ENCODE measurements at regions of chr15 and their contacts with region 1.

Region 1: DNA sequence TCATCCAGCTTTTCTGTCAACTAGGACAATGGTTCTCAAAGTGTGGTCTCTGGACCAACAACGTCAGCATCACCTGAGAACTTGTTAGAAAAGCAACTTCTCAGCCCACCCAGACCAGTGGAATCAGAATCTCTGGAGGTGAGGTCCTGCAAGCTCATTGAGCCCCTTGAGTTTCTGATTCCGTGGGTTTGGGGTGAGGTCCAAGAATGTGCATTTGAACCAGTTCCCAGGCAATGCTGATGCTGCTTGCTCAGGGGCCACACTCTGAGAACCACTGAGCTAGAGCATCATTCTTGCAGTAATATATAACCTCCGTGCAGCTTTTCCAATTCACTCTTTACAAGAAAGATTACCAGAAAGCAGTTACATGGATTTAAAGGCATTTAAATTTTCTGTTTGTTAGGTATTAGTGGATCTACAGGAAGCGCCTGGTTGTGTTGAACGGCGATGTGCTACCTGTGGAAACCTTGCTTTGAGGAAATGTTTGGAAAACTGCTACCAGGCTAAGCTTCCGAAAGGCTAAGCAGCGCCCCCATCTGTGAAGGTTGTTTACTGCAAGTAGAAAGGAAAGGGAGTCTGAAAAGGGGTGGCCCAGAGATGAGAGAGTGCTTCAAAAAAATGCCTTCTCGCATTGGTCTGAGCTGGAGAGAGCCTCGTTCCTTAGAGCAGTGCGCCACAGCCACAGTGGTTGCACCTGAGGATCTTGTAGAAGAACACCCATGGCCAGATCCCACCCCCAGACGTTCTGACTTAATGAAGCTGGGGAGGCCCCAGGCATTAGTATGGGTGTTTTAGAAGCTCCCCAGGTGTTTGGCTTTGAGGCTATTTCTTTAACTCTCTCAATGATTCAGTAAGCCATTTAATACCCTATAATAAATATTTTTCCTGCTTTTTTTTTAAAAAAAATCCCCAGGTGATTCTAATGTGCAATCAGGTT is 50.0 kb downstream of the RLBP1 start:
- DNase-seq: peak; percentile 83
- ATAC-seq: peak; percentile 95
- H3K4me3 Mint-ChIP-seq: no peak overlapping the region
- H3K27ac Mint-ChIP-seq: peak overlapping the region; percentile 32; the same call in 1 of the 2 replicates
- H3K4me1 Mint-ChIP-seq: peaks cover 7% of the 10 kb centered on the region
- H3K27me3 Mint-ChIP-seq: no peaks in the 10 kb centered on the region
- CTCF ChIP-seq: peak; percentile 76

Region 2: DNA sequence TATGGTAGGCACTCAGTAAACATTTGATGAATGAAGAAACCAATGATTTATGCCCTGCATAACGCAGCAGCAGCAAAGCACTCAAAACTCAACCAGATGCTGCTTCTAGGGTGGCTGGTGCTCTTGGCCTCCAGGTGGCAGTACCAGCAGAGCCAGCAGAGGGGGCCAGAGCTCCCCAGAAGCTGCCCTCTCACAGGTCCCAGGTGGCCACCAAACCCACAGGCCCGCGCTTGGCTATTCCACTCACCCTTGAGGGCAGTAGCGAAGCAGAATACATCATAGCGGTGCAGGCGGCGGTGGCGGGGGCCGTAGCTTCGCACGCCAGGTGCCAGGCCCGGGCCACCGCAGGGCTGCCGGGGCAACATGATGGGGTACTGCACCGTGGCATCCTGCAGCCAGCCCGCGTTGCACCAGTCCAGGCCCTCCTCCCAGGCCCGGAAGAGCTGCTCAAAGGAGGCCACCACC is 292.7 kb before region 1 on chr15:
- CTCF ChIA-PET with region 1: interaction called, 18 read pairs
- POLR2A ChIA-PET with region 1: no interaction called
- DNase-seq: peak; percentile 86
- ATAC-seq: peak; percentile 92
- H3K4me3 Mint-ChIP-seq: no peak overlapping the region
- H3K27ac Mint-ChIP-seq: peak overlapping the region; percentile 85; the same call in 1 of the 2 replicates
- H3K4me1 Mint-ChIP-seq: peaks cover 14% of the 10 kb centered on the region
- H3K27me3 Mint-ChIP-seq: no peaks in the 10 kb centered on the region
- CTCF ChIP-seq: peak; percentile 60

Region 3: DNA sequence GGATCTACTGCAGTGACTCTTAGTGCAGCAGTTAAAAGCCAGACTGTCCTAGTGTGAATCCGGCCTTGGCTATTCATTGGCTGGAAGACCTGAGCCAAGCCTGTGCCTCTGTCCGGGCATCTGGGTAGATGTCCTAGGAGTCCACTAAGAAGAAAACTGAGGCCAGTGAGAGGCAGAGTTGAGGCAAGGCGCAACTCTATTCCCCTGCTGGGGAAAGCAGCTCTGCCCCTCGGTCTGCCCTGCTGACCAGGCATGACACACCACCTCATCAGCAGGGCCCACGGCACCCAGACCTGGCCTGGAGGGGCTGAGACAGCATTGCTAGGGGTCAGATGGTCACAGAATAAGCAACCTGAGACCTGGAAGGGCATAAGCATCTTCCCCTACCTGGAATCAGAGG is 129.9 kb before region 1 on chr15:
- CTCF ChIA-PET with region 1: interaction called, 16 read pairs
- POLR2A ChIA-PET with region 1: no interaction called
- DNase-seq: no peak
- ATAC-seq: no peak
- H3K4me3 Mint-ChIP-seq: no peak overlapping the region
- H3K27ac Mint-ChIP-seq: no peak overlapping the region
- H3K4me1 Mint-ChIP-seq: peaks cover 8% of the 10 kb centered on the region
- H3K27me3 Mint-ChIP-seq: peaks cover 7% of the 10 kb centered on the region; the same call in 1 of the 2 replicates
- CTCF ChIP-seq: no peak

Region 4: DNA sequence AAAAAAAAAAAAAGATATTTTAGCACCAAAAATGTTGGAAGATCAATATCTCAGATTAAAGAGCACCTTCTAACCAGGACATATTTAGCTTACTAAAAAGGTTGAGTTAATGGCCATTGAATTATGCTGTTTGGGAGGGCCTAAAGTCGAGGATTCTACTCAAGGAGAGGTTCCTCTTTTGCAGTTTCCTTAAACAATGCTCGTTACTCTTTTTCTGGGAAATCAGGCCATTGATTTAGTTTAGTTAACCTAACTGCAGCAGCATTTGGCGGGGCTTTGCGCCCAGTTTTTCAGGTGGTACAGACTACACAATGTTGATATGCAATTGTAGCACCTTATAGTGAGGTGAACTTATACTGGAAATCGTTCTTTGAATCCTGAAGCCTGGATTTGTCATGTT is 76.3 kb before region 1 on chr15:
- CTCF ChIA-PET with region 1: interaction called, 27 read pairs
- POLR2A ChIA-PET with region 1: no interaction called
- DNase-seq: no peak
- ATAC-seq: no peak
- H3K4me3 Mint-ChIP-seq: no peak overlapping the region
- H3K27ac Mint-ChIP-seq: no peak overlapping the region
- H3K4me1 Mint-ChIP-seq: peaks cover 46% of the 10 kb centered on the region
- H3K27me3 Mint-ChIP-seq: no peaks in the 10 kb centered on the region
- CTCF ChIP-seq: no peak

Region 5: GRCh38 chr15:89129123-89129815 is 42.1 kb before region 1 on chr15:
- CTCF ChIA-PET with region 1: interaction called, 31 read pairs
- POLR2A ChIA-PET with region 1: no interaction called
- DNase-seq: peak; percentile 81
- ATAC-seq: peak; percentile 87
- H3K4me3 Mint-ChIP-seq: no peak overlapping the region
- H3K27ac Mint-ChIP-seq: no peak overlapping the region
- H3K4me1 Mint-ChIP-seq: no peaks in the 10 kb centered on the region
- H3K27me3 Mint-ChIP-seq: no peaks in the 10 kb centered on the region
- CTCF ChIP-seq: peak; percentile 68

Region 6: GRCh38 chr15:89197503-89197971 is 26.1 kb after region 1 on chr15:
- CTCF ChIA-PET with region 1: interaction called, 35 read pairs
- POLR2A ChIA-PET with region 1: no interaction called
- DNase-seq: peak; percentile 72
- ATAC-seq: peak; percentile 84
- H3K4me3 Mint-ChIP-seq: peak overlapping the region; percentile 5; the same call in 1 of the 2 replicates
- H3K27ac Mint-ChIP-seq: peak overlapping the region; percentile 85
- H3K4me1 Mint-ChIP-seq: peaks cover 63% of the 10 kb centered on the region
- H3K27me3 Mint-ChIP-seq: no peaks in the 10 kb centered on the region
- CTCF ChIP-seq: no peak

Region 7: DNA sequence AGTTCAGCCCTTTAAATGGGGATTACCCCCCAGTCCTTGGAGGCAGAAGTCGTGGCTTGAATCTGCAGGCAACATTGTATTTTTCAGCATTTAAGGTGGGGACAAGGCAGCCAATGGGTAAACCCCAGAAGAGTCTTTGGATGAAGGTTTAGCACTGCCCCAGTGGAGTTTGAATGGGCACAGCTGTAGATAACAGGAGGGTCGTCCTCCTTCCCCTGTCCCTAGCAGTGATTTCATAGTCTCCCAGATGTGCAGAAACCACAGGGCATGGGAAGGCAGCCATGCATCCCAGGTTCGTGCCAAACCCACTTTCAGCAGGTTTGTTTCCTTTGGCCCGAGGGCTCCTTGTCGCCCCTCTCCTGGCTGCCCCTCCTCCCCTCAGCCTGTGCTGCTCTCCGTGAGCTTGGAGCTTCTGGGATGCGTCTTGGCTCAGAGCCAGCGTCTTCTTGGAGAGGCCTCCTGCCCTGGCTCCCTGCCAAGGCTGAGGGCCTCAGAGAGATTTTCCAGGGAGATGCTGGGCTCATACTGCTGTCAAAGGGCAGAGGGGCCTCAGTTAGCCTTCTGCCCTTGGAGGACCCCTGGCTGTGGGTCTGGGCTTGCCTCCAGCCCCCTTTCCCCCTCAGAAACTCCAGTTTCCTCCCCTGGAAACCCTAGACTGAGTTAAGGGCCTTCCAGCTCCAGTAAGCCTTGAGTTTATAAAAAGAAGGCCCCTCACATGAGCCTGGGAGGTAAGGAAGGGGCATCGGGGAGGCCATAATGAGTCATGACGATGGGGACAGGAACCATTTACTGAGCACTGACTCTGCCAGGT is 212.2 kb after region 1 on chr15:
- CTCF ChIA-PET with region 1: no interaction called
- POLR2A ChIA-PET with region 1: no interaction called
- DNase-seq: no peak
- ATAC-seq: peak; percentile 50
- H3K4me3 Mint-ChIP-seq: no peak overlapping the region
- H3K27ac Mint-ChIP-seq: no peak overlapping the region
- H3K4me1 Mint-ChIP-seq: peaks cover 30% of the 10 kb centered on the region
- H3K27me3 Mint-ChIP-seq: peaks cover 97% of the 10 kb centered on the region
- CTCF ChIP-seq: no peak